AG04450 (cell line): ENCODE measurements at regions of chr22 and their contacts with region 1.

Region 1: GRCh38 chr22:46367707-46368191 is 32.2 kb downstream of the TRMU start:
- DNase-seq: peak; percentile 10
- H3K4me3 ChIP-seq: no peak overlapping the region
- H3K27ac ChIP-seq: no peak overlapping the region
- H3K27me3 ChIP-seq: peaks cover 9% of the 10 kb centered on the region
- CTCF ChIP-seq: peak; percentile 89

Region 2: GRCh38 chr22:46280999-46281623 is 86.6 kb before region 1 on chr22:
- CTCF ChIA-PET with region 1: no interaction called
- POLR2A ChIA-PET with region 1: no interaction called
- DNase-seq: no peak
- H3K4me3 ChIP-seq: no peak overlapping the region
- H3K27ac ChIP-seq: no peak overlapping the region
- H3K27me3 ChIP-seq: no peaks in the 10 kb centered on the region
- CTCF ChIP-seq: no peak

Region 3: DNA sequence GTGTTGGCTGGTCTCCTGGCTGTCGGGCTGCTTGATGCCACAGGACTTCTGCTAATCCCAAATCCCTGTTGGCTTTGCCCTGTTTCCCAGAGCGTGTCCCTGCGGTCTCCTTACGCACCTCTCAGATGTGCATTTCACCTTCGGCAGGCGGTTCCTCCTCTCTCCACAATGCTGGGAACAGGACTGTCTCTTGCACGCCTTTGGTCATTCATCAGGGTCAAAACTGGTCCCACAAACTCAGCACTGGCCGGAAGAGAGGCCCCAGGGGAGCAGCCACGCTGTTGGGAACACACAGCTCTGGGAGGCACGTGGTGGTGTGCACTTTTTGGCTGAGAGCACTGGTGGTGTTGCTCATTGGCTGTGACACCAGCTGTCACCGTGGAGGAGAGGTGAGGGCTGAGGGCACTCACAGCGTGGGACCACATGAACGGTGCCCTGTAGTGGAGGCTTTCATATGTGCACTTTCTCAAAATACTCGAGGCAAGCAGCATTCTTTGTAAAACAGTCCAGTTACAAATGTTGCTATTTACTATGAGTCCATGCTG is 47.5 kb before region 1 on chr22:
- CTCF ChIA-PET with region 1: no interaction called
- POLR2A ChIA-PET with region 1: no interaction called
- DNase-seq: no peak
- H3K4me3 ChIP-seq: no peak overlapping the region
- H3K27ac ChIP-seq: no peak overlapping the region
- H3K27me3 ChIP-seq: no peaks in the 10 kb centered on the region
- CTCF ChIP-seq: no peak

Region 4: DNA sequence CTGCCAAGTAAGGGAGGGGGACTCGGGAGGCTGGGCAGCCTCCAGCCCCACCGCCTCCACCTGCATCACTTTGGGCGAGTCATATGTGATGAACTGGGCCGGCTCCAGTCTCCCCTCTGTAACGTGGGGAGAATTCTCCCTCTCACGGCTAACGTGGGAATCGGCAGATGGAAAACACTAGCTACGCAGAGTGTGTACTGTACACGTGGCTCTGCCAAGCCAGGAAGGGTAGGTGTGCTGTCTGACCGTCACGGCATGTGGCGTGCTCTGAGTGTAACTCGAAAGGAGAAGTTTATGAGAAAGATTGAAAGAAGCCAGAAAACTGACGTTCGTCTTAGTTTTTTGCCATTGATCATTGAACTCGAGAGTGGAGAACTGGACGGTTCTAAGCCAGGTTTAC is 18.5 kb before region 1 on chr22:
- CTCF ChIA-PET with region 1: no interaction called
- POLR2A ChIA-PET with region 1: no interaction called
- DNase-seq: no peak
- H3K4me3 ChIP-seq: no peak overlapping the region
- H3K27ac ChIP-seq: no peak overlapping the region
- H3K27me3 ChIP-seq: no peaks in the 10 kb centered on the region
- CTCF ChIP-seq: no peak

Region 5: DNA sequence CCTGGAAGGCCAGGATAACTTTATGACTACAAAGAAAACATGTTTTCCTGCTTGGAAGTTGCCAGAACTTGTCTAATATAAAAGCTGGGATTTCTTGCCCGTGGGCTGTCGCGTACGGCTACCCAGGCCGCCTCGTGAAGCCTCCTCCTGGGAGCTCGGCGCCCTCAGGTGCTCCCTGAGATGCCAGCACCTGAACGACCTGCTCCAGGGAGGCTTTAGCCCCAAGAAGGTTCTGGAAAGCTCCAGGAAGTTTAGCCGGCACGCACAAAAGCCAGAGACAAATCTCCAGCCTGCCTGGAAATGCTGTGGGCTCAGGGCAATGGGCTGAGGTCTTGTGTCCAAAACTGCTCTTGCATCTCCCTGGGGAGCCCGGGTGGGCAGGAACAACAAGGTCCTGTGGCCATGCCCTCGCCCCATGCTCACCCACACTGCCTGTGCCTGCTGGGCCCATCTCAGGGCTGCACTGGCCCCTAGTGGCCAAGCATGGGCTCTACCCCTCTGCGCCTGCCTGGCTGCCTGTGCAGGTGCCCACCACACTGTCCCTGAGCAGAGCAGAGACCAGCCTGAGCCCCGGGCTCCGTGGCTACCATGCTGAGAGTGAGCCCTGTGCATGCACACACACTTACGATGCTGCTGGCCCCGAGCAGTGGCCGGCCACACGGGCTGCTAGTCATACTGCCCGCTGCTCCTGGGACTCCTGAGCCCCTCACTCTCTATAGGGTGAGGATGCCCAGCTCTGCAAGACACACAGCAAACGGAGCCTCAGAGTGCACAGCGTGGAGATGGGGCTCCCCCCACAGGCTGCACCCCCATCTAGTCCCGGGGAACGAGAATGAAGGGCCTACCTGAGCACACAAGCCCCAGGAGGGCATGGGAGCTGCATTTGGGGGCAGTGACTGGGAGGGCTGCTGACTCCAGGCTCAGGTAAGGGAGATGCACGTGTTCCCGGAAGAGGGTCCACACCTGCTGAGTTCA is 174.5 kb after region 1 on chr22:
- CTCF ChIA-PET with region 1: interaction called, 112 read pairs
- POLR2A ChIA-PET with region 1: no interaction called
- DNase-seq: no peak
- H3K4me3 ChIP-seq: no peak overlapping the region
- H3K27ac ChIP-seq: no peak overlapping the region
- H3K27me3 ChIP-seq: peaks cover 8% of the 10 kb centered on the region
- CTCF ChIP-seq: peak; percentile 97

Region 6: DNA sequence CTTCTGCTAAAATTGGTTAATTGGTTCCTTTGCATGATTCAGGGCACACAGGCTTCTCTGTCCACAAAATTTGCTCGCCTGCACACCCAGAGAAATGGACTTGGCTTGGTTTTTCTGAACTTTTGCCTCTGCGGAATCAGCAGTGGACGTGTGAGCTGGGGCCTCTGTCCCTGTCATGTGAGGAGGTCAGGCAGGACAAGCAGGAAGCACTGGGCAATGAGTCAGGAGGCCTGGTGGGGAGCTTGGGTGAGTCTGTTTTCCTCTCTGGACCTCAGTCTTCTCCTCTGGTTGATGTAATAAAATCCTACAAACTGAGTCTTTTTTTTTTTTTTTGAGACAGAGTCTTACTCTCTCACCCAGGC is 180.1 kb after region 1 on chr22:
- CTCF ChIA-PET with region 1: interaction called, 112 read pairs
- POLR2A ChIA-PET with region 1: no interaction called
- DNase-seq: peak; percentile 47
- H3K4me3 ChIP-seq: no peak overlapping the region
- H3K27ac ChIP-seq: peak overlapping the region; percentile 74
- H3K27me3 ChIP-seq: peaks cover 4% of the 10 kb centered on the region
- CTCF ChIP-seq: no peak

Region 7: GRCh38 chr22:46563381-46564083 is 195.8 kb after region 1 on chr22:
- CTCF ChIA-PET with region 1: interaction called, 11 read pairs
- POLR2A ChIA-PET with region 1: no interaction called
- DNase-seq: no peak
- H3K4me3 ChIP-seq: no peak overlapping the region
- H3K27ac ChIP-seq: no peak overlapping the region
- H3K27me3 ChIP-seq: no peaks in the 10 kb centered on the region
- CTCF ChIP-seq: peak; percentile 75